IMR-90 (cell line): ENCODE measurements at regions of chr11 and their contacts with region 1.

Region 1: GRCh38 chr11:65695456-65696241 is 16.4 kb upstream of the KAT5 start:
- DNase-seq: no peak
- ATAC-seq: no peak
- H3K4me3 ChIP-seq: no peak overlapping the region
- H3K27ac ChIP-seq: no peak overlapping the region
- H3K4me1 ChIP-seq: no peaks in the 10 kb centered on the region
- H3K27me3 ChIP-seq: peaks cover 43% of the 10 kb centered on the region
- CTCF ChIP-seq: no peak
- POLR2A ChIP-seq: no peak
- RAD21 ChIP-seq: no peak

Region 2: DNA sequence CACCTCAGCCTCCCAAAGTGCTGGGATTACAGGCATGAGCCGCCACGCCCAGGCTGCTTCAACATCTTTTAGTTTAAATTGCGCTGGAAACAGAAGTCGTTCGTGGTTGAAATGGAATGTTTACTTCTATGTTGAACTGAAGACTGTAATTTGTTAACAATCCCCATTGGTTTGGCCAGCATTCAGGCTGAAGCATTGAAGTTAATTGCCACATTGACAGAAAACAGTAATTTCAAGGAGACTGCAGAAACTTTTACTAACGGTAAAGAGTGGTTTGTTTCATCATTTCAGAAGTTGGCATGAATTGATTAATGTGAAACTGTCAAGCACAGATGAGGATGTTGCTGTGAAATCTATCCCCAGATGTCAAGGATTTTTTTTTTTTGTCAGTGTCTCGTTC is 70.9 kb after region 1 on chr11:
- CTCF ChIA-PET with region 1: no interaction called
- POLR2A ChIA-PET with region 1: no interaction called
- dilution Hi-C with region 1: no loop called
- in situ Hi-C with region 1: no loop called
- intact Hi-C with region 1: loop called (anchors 10 kb)
- DNase-seq: peak; percentile 6
- ATAC-seq: 0 out of 2 replicates have a peak, but pooled peaks have one; percentile 11
- H3K4me3 ChIP-seq: no peak overlapping the region
- H3K27ac ChIP-seq: no peak overlapping the region
- H3K4me1 ChIP-seq: no peaks in the 10 kb centered on the region
- H3K27me3 ChIP-seq: no peaks in the 10 kb centered on the region
- CTCF ChIP-seq: no peak
- POLR2A ChIP-seq: no peak
- RAD21 ChIP-seq: no peak